ENCODE measurements at regions of chr3 and their contacts with region 1.

Region 1: DNA sequence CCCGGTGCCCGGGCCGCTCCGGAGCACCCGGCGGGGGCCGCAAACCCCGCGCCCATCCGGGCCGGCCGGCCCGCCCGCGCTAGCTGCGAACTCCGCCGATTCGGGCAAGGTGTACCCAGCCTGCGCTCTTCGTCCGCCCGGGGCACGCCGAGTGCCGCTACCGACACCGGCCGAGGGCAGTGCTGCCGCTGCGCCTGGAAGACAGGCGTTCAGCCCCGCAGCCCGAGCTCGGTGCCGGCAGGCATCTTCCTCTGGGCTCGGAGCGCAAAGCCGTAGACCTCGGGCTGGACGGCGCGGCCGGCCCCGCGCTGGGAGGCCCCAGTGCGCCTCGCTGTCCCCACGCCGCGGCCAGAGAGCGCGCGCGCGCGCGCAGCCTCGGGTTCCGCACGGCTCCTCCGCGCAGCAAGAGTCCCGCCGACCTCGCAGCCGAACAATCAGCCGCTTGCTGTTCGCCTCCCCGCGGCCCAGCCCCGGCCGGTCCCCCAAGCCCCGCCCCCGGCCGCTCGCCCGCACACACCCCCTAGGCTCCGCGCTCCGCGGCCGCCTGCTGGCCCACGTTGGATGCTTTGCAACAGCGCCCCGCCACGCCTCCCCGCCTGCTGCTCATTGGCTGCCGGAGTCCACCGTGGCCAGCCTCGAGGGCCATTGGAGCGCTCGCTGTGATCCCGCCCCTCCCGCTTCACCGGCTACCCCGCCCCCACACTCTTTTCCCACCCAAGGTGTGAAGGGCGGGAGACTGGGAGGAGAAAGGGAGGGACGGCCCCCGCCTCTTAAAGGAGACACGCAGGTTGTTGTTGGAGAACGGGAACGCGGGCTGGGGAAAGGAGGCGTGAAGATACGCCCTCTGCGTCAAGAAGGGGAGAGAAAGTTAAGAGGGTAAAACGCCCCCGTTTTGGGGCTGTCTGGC is at the start of gene LRIG1:
- DNase-seq: peak; percentile 98
- H3K4me3 Mint-ChIP-seq: peak within 1 kb of the TSS; percentile 96
- H3K27ac Mint-ChIP-seq: peak within 1 kb of the TSS; percentile 84
- H3K4me1 Mint-ChIP-seq: peaks cover 59% of the 10 kb centered on the region
- H3K27me3 Mint-ChIP-seq: peaks cover 27% of the 10 kb centered on the region
- total RNA-seq, gene LRIG1: 42.5 and 47.9 TPM in 2 replicates

Region 2: DNA sequence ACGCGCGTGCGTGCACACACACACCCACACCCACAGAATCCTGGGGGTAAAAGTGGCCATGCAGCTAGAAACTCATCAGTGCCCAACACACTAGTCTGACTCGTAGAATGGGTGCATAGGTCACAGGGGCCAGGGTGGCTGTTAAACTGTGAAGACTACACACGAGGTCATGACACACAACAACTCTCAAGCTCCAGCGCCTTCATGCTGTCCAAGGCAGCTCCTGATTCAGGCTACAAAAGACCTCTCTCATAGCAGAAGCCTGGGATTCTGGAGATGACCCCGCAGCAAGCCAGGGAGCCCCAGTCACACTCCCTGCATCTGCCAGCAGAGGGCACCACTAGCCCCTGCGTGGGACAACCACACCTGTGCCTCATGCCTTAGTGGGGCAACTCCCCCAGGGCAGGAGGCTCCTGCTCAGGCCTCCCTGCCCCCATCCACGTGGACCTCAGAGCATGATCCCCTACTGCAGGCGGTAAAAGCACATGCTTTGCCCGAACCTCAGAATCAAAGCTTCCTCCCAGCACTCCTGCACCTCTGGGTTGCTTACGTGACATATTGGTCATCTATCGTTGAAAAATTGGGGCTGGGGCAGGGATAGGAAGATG is 93.1 kb before region 1 on chr3:
- intact Hi-C with region 1: loop called (anchors 1 kb)
- DNase-seq: peak; percentile 52
- H3K4me3 Mint-ChIP-seq: no peak overlapping the region
- H3K27ac Mint-ChIP-seq: no peak overlapping the region
- H3K4me1 Mint-ChIP-seq: peaks cover 10% of the 10 kb centered on the region
- H3K27me3 Mint-ChIP-seq: no peaks in the 10 kb centered on the region

Region 3: GRCh38 chr3:66490214-66490613 is 10.6 kb before region 1 on chr3:
- intact Hi-C with region 1: loop called (anchors 1 kb)
- DNase-seq: no peak
- H3K4me3 Mint-ChIP-seq: peak overlapping the region; percentile 66
- H3K27ac Mint-ChIP-seq: peak overlapping the region; percentile 91
- H3K4me1 Mint-ChIP-seq: peaks cover 85% of the 10 kb centered on the region
- H3K27me3 Mint-ChIP-seq: no peaks in the 10 kb centered on the region

Region 4: GRCh38 chr3:66797889-66798560 is 297.2 kb after region 1 on chr3:
- intact Hi-C with region 1: no loop called
- DNase-seq: no peak
- H3K4me3 Mint-ChIP-seq: no peak overlapping the region
- H3K27ac Mint-ChIP-seq: no peak overlapping the region
- H3K4me1 Mint-ChIP-seq: no peaks in the 10 kb centered on the region
- H3K27me3 Mint-ChIP-seq: peaks cover 11% of the 10 kb centered on the region

Measured in activated T-helper 2 cell treated with anti-CD3 and anti-CD28 coated beads, Interferon-gamma antibody, Interleukin-2, Interleukin-4, amounts not matched to agents 10 μg/mL and 5 μg/mL and 100 μg/mL, durations not matched to agents 14 hours and 24 hours and 36 hours (primary cell).